ENCODE measurements at regions of chr1 and their contacts with region 1.

Region 1: GRCh38 chr1:11650331-11650991 is 3.8 kb downstream of the FBXO2 start:
- DNase-seq: peak; percentile 88
- ATAC-seq: peak; percentile 73

Region 2: GRCh38 chr1:11571906-11572616 is 78.4 kb before region 1 on chr1:
- intact Hi-C with region 1: no loop called
- DNase-seq: no peak
- ATAC-seq: no peak

Region 3: DNA sequence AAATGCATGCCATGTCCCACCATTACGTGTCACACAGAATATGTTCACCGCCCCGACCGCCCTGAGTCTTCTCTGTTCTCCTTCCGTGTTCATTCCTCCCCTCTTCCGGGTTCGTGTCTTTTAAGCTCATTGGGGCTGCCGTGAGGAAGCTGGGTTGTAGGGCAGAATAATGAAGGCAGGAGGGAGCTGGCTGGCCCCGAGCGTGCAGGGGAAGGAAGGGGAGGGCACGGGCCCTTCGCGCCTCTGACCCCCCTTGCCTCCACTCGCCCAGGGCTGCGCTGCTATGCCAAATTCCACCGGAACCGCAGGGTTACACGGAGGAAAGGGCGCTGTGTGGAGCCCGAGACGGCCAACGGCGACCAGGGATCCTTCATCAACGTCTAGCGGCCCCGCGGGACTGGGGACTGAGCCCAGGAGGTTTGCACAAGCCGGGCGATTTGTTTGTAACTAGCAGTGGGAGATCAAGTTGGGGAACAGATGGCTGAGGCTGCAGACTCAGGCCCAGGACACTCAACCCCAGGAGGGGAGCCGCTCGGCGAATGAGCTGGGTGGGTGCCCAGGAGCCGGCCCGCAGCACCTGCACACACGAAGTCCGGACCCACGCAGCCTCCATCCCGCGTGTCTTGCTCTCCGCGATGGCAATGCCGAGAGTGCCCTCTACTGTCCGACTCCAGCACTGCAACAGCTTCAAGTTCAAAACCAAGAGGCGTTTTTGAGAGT is 69.0 kb after region 1 on chr1:
- intact Hi-C with region 1: loop called (anchors 1 kb)
- DNase-seq: peak; percentile 94
- ATAC-seq: peak; percentile 77

Region 4: GRCh38 chr1:11851180-11851579 is 200.7 kb after region 1 on chr1:
- intact Hi-C with region 1: no loop called
- DNase-seq: no peak
- ATAC-seq: no peak

Measured in Right ventricle myocardium inferior (tissue), 1 donor.